Right ventricle myocardium superior (tissue), 1 donor: ENCODE measurements at regions of chr1 and their contacts with region 1.

Region 1: DNA sequence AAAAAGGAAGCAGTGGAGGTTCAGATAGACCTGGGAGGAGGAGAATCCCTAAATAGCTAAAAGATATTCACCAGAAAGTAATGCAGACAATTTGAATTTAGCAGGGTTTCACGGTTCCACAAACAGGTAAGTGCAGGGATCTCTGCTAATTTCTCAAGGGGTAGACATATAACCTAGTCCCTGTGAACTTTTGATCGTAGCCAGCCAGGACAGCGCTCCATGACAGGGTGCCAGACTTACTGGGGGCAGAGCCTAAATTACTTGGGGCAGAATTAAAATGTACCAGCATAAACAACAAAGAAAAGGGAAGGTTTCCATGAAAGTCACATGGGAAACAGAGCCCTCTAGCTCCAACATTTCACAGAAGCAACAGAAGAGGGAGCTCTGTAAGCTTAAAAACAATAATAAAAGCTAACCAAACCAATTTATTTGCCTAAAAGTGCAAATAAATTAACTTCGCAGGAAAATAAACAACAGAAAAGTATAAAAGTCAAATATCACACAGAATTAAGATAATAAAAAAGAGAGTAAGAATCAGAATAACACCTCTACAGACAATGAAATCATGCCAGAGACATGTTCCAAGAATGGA is 198.3 kb downstream of the DUSP10 start:
- DNase-seq: no peak
- ATAC-seq: peak; percentile 72

Region 2: GRCh38 chr1:221741711-221742554 is 198.3 kb after region 1 on chr1 and contains the start of gene DUSP10:
- intact Hi-C with region 1: loop called (anchors 10 kb)
- DNase-seq: peak; percentile 99
- ATAC-seq: peak; percentile 93
- total RNA-seq, gene DUSP10: 4.5 TPM

Region 3: DNA sequence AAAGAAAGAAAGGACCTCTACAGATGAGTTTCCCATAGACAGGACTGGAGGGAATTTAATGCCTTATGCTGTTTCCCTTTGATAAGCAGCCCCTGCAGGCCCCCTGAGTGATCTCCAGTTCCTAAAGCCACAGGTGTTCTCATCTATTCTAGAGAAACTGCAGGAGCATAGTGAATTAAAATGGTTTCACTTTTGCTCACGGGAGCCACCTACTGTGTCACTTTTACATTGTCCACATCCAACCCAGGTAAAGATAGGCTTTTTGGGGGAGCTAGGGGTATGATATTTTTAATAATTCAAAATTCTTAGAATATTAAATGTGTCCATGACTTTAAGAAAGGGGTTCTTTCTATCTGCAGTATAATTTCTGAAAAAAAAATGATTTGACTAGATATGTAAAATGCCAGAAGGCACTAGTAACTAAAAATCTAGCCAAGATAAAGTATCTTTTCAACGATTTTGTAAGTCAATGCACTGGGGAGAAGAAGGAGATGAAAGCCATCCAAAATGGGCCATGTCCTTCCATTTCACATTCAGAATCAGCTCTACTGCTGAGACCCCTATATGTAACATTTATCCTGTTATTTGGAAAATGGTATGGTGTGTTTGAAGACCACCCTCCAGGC is 465.6 kb after region 1 on chr1:
- intact Hi-C with region 1: loop called (anchors 10 kb)
- DNase-seq: no peak
- ATAC-seq: peak; percentile 71